HCT116 (cell line): ENCODE measurements at regions of chr1 and their contacts with region 1.

Region 1: GRCh38 chr1:244041471-244042110 is 9.5 kb upstream of the ZBTB18 start:
- DNase-seq: no peak
- ATAC-seq: no peak
- H3K4me3 ChIP-seq: no peak overlapping the region
- H3K27ac ChIP-seq: no peak overlapping the region
- H3K4me1 ChIP-seq: no peaks in the 10 kb centered on the region
- H3K27me3 ChIP-seq: peaks cover 84% of the 10 kb centered on the region
- CTCF ChIP-seq: no peak
- POLR2A ChIP-seq: no peak
- RAD21 ChIP-seq: no peak

Region 2: DNA sequence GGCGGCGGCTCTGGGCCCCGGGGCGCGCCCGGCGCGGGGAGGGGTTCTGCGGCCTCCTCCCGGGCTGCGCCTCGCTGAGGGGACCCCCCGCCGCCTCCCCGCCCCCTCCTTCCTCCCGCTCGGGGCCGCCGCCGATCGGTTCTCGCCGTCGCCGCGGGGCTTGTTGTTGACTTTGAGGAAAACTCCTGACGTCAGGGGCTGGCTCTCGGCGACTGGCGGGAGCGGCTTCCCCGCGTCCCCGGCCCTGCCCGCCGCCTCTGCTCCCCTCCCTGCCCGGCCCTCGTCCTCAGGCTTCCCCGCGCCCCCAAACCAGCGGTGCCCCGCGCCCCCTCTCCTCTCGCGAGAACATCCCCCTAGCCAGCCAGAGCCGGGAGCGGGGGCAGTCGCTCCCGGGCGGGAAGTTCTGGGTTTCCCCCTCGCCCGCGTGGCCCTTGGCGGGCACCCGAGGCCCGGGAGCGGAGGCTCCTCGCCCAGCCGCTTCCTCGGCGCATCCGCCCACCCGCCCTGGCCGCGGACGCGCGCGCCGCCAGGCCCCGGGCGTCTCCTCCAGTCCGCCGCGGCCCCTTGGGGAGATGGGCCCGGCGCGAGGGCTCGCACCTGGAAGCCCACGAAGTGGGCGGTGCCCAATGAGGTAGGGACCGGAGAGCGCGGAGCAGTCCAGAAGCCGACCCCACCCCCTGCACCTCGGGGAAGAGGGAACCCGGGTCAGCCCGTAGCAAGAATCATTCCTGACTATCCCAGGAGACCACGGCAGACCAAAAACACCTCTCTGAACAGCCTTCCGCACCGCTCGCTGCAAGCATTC is 190.9 kb before region 1 on chr1:
- CTCF ChIA-PET with region 1: no interaction called
- POLR2A ChIA-PET with region 1: no interaction called
- RAD21 ChIA-PET with region 1: no interaction called
- intact Hi-C with region 1: loop called (anchors 5 kb)
- DNase-seq: no peak
- ATAC-seq: peak; percentile 76
- H3K4me3 ChIP-seq: peak overlapping the region; percentile 13 to 20; a peak in 2 of 4 replicates
- H3K27ac ChIP-seq: no peak overlapping the region
- H3K4me1 ChIP-seq: no peaks in the 10 kb centered on the region
- H3K27me3 ChIP-seq: peaks cover 54% of the 10 kb centered on the region
- CTCF ChIP-seq: no peak
- POLR2A ChIP-seq: no peak
- RAD21 ChIP-seq: no peak

Region 3: DNA sequence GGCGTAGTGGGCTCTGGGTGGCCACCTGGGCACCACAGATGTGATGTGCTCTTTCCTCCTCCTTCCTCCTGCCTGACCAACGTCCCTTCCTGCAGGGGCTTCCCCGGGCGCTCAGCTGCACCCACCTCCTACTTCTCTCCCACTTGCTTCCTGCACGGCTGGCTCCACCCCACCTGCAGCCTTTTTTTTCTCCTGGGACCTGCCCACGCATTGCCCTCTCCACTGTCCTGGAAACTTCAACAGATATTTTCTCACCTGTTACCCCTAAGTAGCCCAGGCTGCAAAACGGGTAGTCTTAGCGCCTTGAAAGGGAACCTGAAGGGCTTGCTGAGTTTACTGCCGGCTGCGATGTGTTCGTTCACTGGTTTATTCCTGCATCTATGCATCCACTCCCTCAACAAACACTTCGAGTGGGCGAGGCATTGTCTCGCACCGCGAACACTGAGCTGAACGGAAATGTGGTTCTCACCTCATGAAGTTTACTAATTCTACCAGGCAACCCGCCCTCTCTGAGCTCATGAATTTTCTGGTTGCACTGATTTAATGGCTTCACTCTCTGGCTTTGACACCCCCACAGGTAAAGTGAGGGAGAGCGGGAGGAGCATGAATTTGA is 33.1 kb after region 1 on chr1:
- CTCF ChIA-PET with region 1: no interaction called
- POLR2A ChIA-PET with region 1: no interaction called
- RAD21 ChIA-PET with region 1: no interaction called
- intact Hi-C with region 1: no loop called
- DNase-seq: no peak
- ATAC-seq: no peak
- H3K4me3 ChIP-seq: no peak overlapping the region
- H3K27ac ChIP-seq: no peak overlapping the region
- H3K4me1 ChIP-seq: no peaks in the 10 kb centered on the region
- H3K27me3 ChIP-seq: peaks cover 36% of the 10 kb centered on the region
- CTCF ChIP-seq: no peak
- POLR2A ChIP-seq: no peak
- RAD21 ChIP-seq: no peak

Region 4: DNA sequence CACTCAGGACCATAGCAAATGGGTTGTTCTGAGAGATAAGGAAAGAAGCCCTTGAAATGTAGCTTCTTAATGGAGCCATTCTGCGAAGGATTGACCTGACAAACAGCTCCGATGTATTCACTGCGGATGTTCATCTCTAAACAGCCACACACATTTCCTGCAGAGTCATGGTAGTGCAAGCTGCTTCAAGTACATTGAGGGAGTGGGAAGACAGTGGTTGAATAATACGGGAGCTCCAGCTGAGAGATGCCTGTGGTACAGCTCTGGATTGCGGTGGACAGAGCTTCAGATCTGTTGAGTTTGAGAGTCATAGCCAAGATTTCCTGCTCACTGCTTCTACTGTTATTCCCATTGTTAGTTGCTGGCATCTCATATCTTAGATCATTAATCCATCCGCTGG is 96.1 kb after region 1 on chr1:
- CTCF ChIA-PET with region 1: no interaction called
- POLR2A ChIA-PET with region 1: no interaction called
- RAD21 ChIA-PET with region 1: no interaction called
- intact Hi-C with region 1: no loop called
- DNase-seq: no peak
- ATAC-seq: no peak
- H3K4me3 ChIP-seq: no peak overlapping the region
- H3K27ac ChIP-seq: no peak overlapping the region
- H3K4me1 ChIP-seq: no peaks in the 10 kb centered on the region
- H3K27me3 ChIP-seq: peaks cover 86% of the 10 kb centered on the region
- CTCF ChIP-seq: no peak
- POLR2A ChIP-seq: no peak
- RAD21 ChIP-seq: no peak